ENCODE measurements at regions of chr1 and their contacts with region 1.

Region 1: DNA sequence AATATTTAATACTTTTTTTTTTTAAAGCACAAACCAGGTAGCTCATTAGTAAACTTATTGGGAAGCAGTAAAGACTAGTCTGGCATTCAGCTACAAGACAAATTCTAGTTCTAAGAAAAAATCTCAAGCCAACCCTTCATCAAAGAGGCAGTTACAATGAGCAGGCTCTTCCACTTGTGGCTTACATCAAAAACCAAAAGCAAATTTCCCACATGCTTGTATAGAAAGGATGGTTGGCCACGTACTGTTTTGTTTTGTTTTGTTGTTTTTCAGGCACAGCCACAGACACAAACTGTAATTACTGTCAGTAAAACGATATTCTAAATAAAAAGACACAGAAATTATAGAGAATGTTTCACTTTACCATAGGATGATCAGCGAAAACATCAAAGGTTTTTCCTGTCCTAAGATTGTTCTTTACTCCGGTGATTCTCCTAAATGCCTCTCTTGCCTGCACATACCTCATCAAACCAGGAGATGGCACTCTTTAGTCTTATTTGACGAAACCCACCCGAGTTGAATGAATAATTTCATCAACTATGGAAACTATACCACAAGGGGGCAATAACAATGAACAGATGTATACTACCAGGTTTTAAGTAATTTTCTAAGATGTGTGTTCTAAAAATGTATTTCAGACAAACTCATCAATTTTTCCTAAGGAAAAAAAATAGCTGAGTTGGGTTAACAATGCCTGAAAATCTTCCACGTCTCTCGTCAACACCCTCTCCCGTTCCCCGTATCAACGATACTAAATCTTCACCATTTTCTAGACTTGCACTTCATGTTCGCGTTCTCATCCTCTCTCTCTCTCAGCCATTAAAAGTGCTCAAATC is 26.9 kb downstream of the RPL5 start:
- H3K4me3 ChIP-seq: no peak overlapping the region
- H3K27ac ChIP-seq: no peak overlapping the region
- H3K4me1 ChIP-seq: no peaks in the 10 kb centered on the region
- CTCF ChIP-seq: peak; percentile 90

Region 2: GRCh38 chr1:92872719-92873118 is 13.9 kb after region 1 on chr1:
- CTCF ChIA-PET with region 1: interaction called, 40 read pairs
- POLR2A ChIA-PET with region 1: interaction called, 3 read pairs
- H3K4me3 ChIP-seq: no peak overlapping the region
- H3K27ac ChIP-seq: no peak overlapping the region
- H3K4me1 ChIP-seq: 0 out of 2 replicates have a peak, but pooled peaks cover 4% of the 10 kb centered on the region
- CTCF ChIP-seq: no peak

Region 3: GRCh38 chr1:92909321-92909720 is 50.5 kb after region 1 on chr1:
- CTCF ChIA-PET with region 1: interaction called, 19 read pairs
- POLR2A ChIA-PET with region 1: no interaction called
- H3K4me3 ChIP-seq: no peak overlapping the region
- H3K27ac ChIP-seq: no peak overlapping the region
- H3K4me1 ChIP-seq: no peaks in the 10 kb centered on the region; the same call in 1 of the 2 replicates
- CTCF ChIP-seq: no peak

Region 4: GRCh38 chr1:92968138-92969032 is 109.6 kb after region 1 on chr1:
- CTCF ChIA-PET with region 1: interaction called, 32 read pairs
- POLR2A ChIA-PET with region 1: no interaction called
- H3K4me3 ChIP-seq: no peak overlapping the region
- H3K27ac ChIP-seq: no peak overlapping the region
- H3K4me1 ChIP-seq: peaks cover 3% of the 10 kb centered on the region
- CTCF ChIP-seq: no peak

Region 5: GRCh38 chr1:93000751-93001175 is 142.0 kb after region 1 on chr1:
- CTCF ChIA-PET with region 1: interaction called, 32 read pairs
- POLR2A ChIA-PET with region 1: no interaction called
- H3K4me3 ChIP-seq: no peak overlapping the region
- H3K27ac ChIP-seq: no peak overlapping the region
- H3K4me1 ChIP-seq: peaks cover 9% of the 10 kb centered on the region; the same call in 1 of the 2 replicates
- CTCF ChIP-seq: no peak

Region 6: GRCh38 chr1:93061895-93062792 is 203.4 kb after region 1 on chr1:
- CTCF ChIA-PET with region 1: interaction called, 44 read pairs
- POLR2A ChIA-PET with region 1: no interaction called
- H3K4me3 ChIP-seq: no peak overlapping the region
- H3K27ac ChIP-seq: no peak overlapping the region
- H3K4me1 ChIP-seq: no peaks in the 10 kb centered on the region
- CTCF ChIP-seq: peak; percentile 47; the same call in 1 of the 2 replicates